PC-3 (cell line): ENCODE measurements at regions of chr1 and their contacts with region 1.

Region 1: DNA sequence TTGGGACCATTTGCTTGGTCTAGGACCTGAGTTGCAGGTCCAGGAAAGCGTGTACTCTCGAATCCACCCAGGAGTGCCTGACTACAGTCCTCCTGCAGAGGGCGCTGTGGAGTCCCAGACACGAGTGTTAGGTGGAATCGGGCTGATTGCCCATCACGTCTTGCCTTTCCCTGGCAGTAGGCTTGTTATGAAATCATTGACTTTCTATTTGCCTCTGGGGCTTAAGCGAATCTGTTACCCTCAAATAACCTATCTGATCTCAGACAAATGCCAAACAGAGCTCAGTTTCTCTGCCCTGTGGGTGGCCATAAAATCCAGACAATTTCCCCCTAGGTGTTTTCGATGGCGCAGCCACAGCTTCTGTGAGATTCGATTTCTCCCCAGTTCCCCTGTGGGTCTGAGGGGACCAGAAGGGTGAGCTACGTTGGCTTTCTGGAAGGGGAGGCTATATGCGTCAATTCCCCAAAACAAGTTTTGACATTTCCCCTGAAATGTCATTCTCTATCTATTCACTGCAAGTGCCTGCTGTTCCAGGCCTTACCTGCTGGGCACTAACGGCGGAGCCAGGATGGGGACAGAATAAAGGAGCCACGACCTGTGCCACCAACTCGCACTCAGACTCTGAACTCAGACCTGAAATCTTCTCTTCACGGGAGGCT is at the start of gene IL20:
- DNase-seq: peak; percentile 98
- ATAC-seq: peak; percentile 81
- H3K4me3 ChIP-seq: no peak within 1 kb of the TSS
- H3K27ac ChIP-seq: no peak within 1 kb of the TSS
- H3K4me1 ChIP-seq: no peaks in the 10 kb centered on the region
- H3K27me3 ChIP-seq: peaks cover 8% of the 10 kb centered on the region; the same call in 1 of the 2 replicates
- CTCF ChIP-seq: peak; percentile 100
- total RNA-seq, gene IL20: not detected in 2 replicates

Region 2: GRCh38 chr1:206706298-206706791 is 158.8 kb before region 1 on chr1:
- CTCF ChIA-PET with region 1: no interaction called
- POLR2A ChIA-PET with region 1: no interaction called
- intact Hi-C with region 1: no loop called
- DNase-seq: no peak
- ATAC-seq: no peak
- H3K4me3 ChIP-seq: no peak overlapping the region
- H3K27ac ChIP-seq: no peak overlapping the region
- H3K4me1 ChIP-seq: peaks cover 32% of the 10 kb centered on the region
- H3K27me3 ChIP-seq: no peaks in the 10 kb centered on the region
- CTCF ChIP-seq: no peak

Region 3: GRCh38 chr1:206878456-206878855 is 13.3 kb after region 1 on chr1:
- CTCF ChIA-PET with region 1: no interaction called
- POLR2A ChIA-PET with region 1: no interaction called
- intact Hi-C with region 1: no loop called
- DNase-seq: peak; percentile 40
- ATAC-seq: no peak; the same call in 1 of the 2 replicates
- H3K4me3 ChIP-seq: no peak overlapping the region
- H3K27ac ChIP-seq: no peak overlapping the region
- H3K4me1 ChIP-seq: no peaks in the 10 kb centered on the region
- H3K27me3 ChIP-seq: no peaks in the 10 kb centered on the region
- CTCF ChIP-seq: peak; percentile 67

Region 4: DNA sequence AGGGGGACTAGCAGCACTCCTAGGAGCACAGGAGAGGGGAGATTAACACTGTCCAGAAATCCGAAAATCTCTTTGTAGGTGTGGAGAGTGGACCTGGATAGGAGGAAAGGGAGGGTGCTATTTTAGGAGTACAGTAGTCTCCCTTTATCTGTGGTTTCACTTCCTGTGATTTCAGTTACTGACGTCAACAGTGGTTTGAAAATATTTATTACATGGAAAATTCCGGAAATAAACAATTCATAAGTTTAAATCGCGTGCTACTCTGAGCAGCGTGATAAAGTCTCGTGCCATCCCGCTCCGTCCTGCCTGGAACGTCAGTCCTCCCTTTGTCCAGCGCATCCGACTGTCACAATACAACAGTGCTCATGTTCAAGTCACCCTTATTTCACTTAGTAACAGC is 25.5 kb after region 1 on chr1:
- CTCF ChIA-PET with region 1: interaction called, 3 read pairs
- POLR2A ChIA-PET with region 1: no interaction called
- intact Hi-C with region 1: loop called (anchors 1 kb)
- DNase-seq: peak; percentile 96
- ATAC-seq: peak; percentile 60
- H3K4me3 ChIP-seq: peak overlapping the region; percentile 48
- H3K27ac ChIP-seq: peak overlapping the region; percentile 92
- H3K4me1 ChIP-seq: peaks cover 75% of the 10 kb centered on the region
- H3K27me3 ChIP-seq: no peaks in the 10 kb centered on the region
- CTCF ChIP-seq: no peak

Region 5: DNA sequence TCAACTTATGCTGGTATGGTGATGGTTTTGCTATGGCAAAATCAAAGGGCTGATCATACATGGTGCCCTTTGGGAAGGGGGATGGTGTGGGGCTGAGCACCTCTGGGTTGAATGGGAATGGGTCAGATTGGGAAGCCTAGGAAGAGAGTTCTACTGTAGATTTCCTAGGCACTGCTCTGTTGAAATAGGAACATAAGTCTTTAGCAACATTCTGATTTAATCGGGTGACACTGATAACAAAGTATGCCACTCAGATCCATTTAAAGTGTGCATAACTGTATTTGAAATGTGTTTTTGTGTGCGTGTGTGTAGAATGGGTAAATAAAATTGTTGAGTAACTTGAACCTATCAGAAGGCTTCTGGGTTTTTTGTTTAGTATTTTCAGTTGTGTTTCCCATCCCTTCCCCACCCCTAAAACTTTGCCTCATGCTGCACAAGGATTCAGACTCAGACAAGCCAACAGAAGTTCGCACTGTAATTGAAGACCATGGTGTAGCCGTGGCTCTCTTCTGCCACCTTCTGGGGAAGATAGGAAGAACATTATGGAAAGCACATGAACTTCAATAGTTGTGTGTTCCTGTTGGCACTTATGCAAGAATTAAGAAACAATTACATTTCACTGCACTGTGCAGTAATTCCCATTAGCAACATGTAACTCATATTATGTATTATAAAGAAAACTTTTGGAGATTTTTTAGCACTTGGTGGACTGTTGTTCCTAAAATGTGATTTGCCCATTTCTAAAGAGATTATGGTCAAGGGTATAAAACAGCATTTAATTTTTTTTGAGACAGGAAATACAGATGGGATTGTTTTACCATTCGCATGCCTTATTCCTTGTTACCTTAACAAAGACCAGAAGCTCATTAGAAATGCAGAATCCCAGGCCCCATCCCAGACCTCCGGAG is 212.6 kb after region 1 on chr1:
- CTCF ChIA-PET with region 1: no interaction called
- POLR2A ChIA-PET with region 1: no interaction called
- intact Hi-C with region 1: loop called (anchors 5 kb)
- DNase-seq: peak; percentile 98
- ATAC-seq: peak; percentile 68
- H3K4me3 ChIP-seq: no peak overlapping the region
- H3K27ac ChIP-seq: peak overlapping the region; percentile 3; the same call in 1 of the 2 replicates
- H3K4me1 ChIP-seq: peaks cover 37% of the 10 kb centered on the region
- H3K27me3 ChIP-seq: no peaks in the 10 kb centered on the region
- CTCF ChIP-seq: peak; percentile 99